Head of caudate nucleus (tissue), 42 donors: ENCODE measurements at regions of chr5 and their contacts with region 1.

Region 1: DNA sequence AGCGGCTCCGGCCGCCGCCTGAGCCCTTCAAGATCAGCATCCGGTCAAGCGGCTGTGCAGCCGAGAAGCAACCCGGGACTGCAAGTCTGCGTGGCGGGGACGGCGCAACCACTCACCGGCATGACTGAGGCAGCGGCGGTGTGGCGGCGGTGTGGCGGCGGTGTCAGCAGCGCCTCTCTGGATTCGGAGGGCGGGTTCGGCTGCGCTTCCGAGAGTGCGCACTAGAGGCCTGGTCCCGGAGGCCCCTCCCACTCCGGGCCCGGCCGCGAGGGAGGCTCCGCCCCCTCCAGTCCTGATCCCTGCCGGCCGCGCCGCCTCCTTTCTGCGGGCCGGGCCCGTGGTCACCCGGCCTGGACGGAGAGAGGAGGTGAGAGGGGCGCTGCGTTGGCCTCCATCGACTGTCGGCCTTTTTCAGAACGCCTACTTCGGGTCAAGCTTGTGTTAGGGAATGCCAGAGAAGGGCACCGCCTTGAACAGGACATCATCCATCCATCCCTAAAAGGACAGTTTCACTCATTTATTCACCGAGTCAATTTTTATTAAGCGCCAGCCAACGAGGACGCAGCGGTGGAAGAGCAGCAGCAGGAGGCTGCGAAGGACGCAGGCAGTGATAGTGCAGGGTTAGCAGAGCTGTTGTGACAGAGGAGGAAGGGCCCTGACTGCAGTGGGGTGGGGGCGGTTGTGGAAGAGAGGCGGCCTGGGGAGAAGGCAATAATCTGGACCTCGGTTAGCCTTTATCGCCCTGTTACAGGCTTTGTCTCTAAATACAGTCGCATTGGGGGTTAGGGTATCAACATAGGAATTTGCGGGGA is at the start of gene ATOX1:
- DNase-seq: peak; percentile 84 to 97 (median 94)

Region 2: GRCh38 chr5:151270599-151270998 is 488.0 kb before region 1 on chr5:
- intact Hi-C with region 1: no loop called
- DNase-seq: no peak

Region 3: DNA sequence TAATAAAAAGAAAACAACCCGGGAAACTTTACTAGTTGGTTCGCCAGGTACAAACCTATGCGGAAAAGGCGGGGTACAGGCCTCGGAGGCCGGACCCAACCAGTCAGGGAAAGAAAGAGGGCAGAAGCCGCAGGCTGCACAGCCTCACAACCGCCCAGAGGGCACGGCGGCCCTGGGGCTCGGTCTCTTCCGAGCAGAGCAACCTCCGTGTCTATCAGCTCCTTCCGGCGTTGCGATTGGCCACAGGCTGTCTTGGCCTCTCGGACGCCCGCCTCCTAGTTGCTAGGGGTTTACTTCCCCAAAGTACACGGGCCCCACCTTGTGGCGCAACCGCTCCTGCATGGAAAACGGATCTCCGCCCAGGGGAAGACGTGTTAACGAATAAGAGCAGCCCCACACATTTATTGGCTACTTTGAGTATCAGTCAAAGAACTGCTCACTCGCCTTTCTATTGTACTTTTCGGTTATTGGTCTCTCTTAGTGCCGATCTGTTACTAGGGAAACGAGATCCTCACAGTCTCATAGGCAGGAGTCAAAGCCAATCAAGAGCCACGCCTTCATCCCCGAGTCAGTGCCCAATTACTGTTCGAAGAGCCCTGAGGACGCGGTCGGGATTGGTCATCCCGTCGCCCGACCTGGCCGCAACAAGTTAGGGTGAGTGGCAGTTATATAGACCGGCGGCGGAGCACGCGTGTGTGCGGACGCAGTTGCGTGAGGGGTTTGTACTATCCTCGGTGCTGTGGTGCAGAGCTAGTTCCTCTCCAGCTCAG is 12.8 kb after region 1 on chr5 and contains the start of gene G3BP1:
- intact Hi-C with region 1: loop called (anchors 1 kb)
- DNase-seq: peak; percentile 98 to 100 (median 100)

Region 4: DNA sequence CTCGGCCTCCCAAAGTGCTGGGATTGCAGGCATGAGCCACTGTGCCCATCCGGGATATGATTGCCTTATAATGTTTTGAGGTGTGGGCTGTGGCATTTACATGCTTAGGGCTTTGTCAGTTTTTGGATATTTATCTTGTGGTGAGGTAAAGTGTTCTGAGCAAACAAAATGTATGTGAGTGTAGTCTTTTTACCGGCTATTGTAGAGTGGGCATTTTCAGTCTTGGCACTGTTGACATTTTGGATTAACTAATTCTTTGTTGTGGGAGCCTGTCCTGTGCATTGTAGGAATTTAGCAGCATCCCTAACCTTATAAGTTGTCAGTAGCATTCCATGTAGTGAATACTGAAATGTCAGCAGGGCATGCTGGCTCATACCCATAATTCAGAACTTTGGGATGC is 34.7 kb after region 1 on chr5:
- intact Hi-C with region 1: no loop called
- DNase-seq: no peak